Common myeloid progenitor, CD34-positive (primary cell): ENCODE measurements at regions of chr16 and their contacts with region 1.

Region 1: GRCh38 chr16:87266846-87267245 is 50.3 kb downstream of the C16orf95 start:
- DNase-seq: no peak
- H3K4me3 ChIP-seq: no peak overlapping the region
- H3K27ac ChIP-seq: no peak overlapping the region
- H3K4me1 ChIP-seq: no peaks in the 10 kb centered on the region
- H3K27me3 ChIP-seq: peaks cover 0 to 2% (median 0%) of the 10 kb centered on the region in 5 experiments

Region 2: GRCh38 chr16:87278191-87279095 is 11.6 kb after region 1 on chr16:
- CTCF ChIA-PET with region 1: interaction called, 19 read pairs
- POLR2A ChIA-PET with region 1: no interaction called
- DNase-seq: peak; percentile 68 to 75 (median 70)
- H3K4me3 ChIP-seq: no peak overlapping the region
- H3K27ac ChIP-seq: no peak overlapping the region
- H3K4me1 ChIP-seq: peaks cover 3 to 17% (median 14%) of the 10 kb centered on the region in 4 experiments
- H3K27me3 ChIP-seq: peaks cover 0 to 10% (median 0%) of the 10 kb centered on the region in 5 experiments